ENCODE measurements at regions of chr1 and their contacts with region 1.

Region 1: GRCh38 chr1:160795951-160796383 is at the start of gene LY9:
- DNase-seq: peak; percentile 90
- H3K4me3 Mint-ChIP-seq: peak within 1 kb of the TSS; percentile 77
- H3K27ac Mint-ChIP-seq: peak within 1 kb of the TSS; percentile 88
- H3K4me1 Mint-ChIP-seq: peaks cover 61% of the 10 kb centered on the region
- H3K27me3 Mint-ChIP-seq: no peaks in the 10 kb centered on the region
- total RNA-seq, gene LY9: 4.8 to 4.9 TPM

Region 2: GRCh38 chr1:160437432-160438316 is 358.3 kb before region 1 on chr1:
- CTCF ChIA-PET with region 1: no interaction called
- POLR2A ChIA-PET with region 1: no interaction called
- intact Hi-C with region 1: loop called (anchors 10 kb)
- DNase-seq: peak; percentile 32
- H3K4me3 Mint-ChIP-seq: peak overlapping the region; percentile 59
- H3K27ac Mint-ChIP-seq: peak overlapping the region; percentile 84
- H3K4me1 Mint-ChIP-seq: peaks cover 45% of the 10 kb centered on the region
- H3K27me3 Mint-ChIP-seq: no peaks in the 10 kb centered on the region

Region 3: GRCh38 chr1:160494620-160495019 is 301.3 kb before region 1 on chr1:
- CTCF ChIA-PET with region 1: no interaction called
- POLR2A ChIA-PET with region 1: no interaction called
- intact Hi-C with region 1: no loop called
- DNase-seq: no peak
- H3K4me3 Mint-ChIP-seq: no peak overlapping the region
- H3K27ac Mint-ChIP-seq: no peak overlapping the region
- H3K4me1 Mint-ChIP-seq: peaks cover 45% of the 10 kb centered on the region
- H3K27me3 Mint-ChIP-seq: no peaks in the 10 kb centered on the region

Region 4: GRCh38 chr1:160711602-160712311 is 84.2 kb before region 1 on chr1 and contains the start of gene CD48:
- CTCF ChIA-PET with region 1: interaction called, 3 read pairs
- POLR2A ChIA-PET with region 1: interaction called, 11 read pairs
- intact Hi-C with region 1: no loop called
- DNase-seq: peak; percentile 65
- H3K4me3 Mint-ChIP-seq: no peak within 1 kb of the TSS
- H3K27ac Mint-ChIP-seq: no peak within 1 kb of the TSS
- H3K4me1 Mint-ChIP-seq: peaks cover 17% of the 10 kb centered on the region
- H3K27me3 Mint-ChIP-seq: no peaks in the 10 kb centered on the region
- total RNA-seq, gene CD48: 190 to 194 TPM

Region 5: DNA sequence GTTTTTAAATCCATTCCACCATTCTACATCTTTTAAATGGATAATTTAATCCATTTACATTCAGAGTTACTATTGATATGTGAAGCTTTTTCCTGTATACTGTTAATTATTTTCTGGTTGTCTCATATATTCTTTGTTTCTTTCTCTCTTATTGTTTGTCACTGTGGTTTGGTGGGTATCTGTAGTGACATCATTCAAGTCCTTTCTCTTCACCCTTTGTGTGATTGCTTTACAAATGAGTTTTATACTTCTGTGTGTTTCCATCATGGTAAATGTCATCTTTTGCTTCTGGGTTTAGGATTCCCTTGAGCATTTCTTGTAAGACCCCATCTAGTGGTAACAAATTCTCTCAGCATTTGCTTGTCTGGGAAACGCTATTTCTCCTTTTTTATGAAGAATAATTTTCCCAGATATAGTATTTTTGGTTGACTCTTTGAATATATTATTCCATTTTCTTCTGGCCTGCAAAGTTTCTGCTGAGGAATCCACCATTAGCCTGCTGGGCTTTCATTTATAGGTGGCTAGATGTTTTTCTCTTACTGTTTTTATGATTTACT is 10.2 kb after region 1 on chr1:
- CTCF ChIA-PET with region 1: interaction called, 18 read pairs
- POLR2A ChIA-PET with region 1: no interaction called
- intact Hi-C with region 1: loop called (anchors 1 kb)
- DNase-seq: no peak
- H3K4me3 Mint-ChIP-seq: no peak overlapping the region
- H3K27ac Mint-ChIP-seq: peak overlapping the region; percentile 70
- H3K4me1 Mint-ChIP-seq: peaks cover 72% of the 10 kb centered on the region
- H3K27me3 Mint-ChIP-seq: no peaks in the 10 kb centered on the region

Measured in activated CD4-positive, alpha-beta memory T cell treated with anti-CD3 and anti-CD28 coated beads for 36 hours (primary cell).